PC-9 (cell line): ENCODE measurements at regions of chr19 and their contacts with region 1.

Region 1: GRCh38 chr19:39156326-39157230 is 31.0 kb downstream of the PAK4 start:
- DNase-seq: peak in 1 of 2 experiments; percentile 43
- H3K4me3 ChIP-seq: no peak overlapping the region
- H3K27ac ChIP-seq: no peak overlapping the region
- H3K4me1 ChIP-seq: peaks cover 43% of the 10 kb centered on the region
- H3K27me3 ChIP-seq: no peaks in the 10 kb centered on the region
- CTCF ChIP-seq: no peak

Region 2: GRCh38 chr19:38583219-38583984 is 573.2 kb before region 1 on chr19:
- CTCF ChIA-PET with region 1: no interaction called
- POLR2A ChIA-PET with region 1: no interaction called
- intact Hi-C with region 1: no loop called
- DNase-seq: no peak
- H3K4me3 ChIP-seq: no peak overlapping the region
- H3K27ac ChIP-seq: no peak overlapping the region
- H3K4me1 ChIP-seq: peaks cover 10% of the 10 kb centered on the region
- H3K27me3 ChIP-seq: no peaks in the 10 kb centered on the region
- CTCF ChIP-seq: no peak

Region 3: DNA sequence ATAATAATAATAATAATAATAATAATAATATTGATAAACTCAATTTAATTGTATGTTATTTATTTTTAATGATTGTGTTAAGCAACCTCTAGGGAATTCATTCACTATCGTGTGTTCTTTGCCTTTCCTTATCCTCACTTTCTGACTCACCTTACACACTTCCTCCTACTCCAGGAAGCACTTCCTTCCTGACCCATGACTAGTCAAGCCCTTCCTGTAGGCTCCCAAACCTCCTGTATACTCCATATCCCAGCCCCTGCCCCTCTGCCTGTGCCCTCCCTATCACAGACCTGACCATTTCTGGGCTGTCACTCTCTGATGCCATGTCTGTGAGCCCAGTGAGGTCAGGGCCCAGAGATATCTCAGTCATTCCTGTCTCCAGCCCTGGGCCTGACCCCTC is 351.4 kb before region 1 on chr19:
- CTCF ChIA-PET with region 1: no interaction called
- POLR2A ChIA-PET with region 1: no interaction called
- intact Hi-C with region 1: no loop called
- DNase-seq: peak in 1 of 2 experiments; percentile 35
- H3K4me3 ChIP-seq: no peak overlapping the region
- H3K27ac ChIP-seq: no peak overlapping the region
- H3K4me1 ChIP-seq: peaks cover 8% of the 10 kb centered on the region
- H3K27me3 ChIP-seq: no peaks in the 10 kb centered on the region
- CTCF ChIP-seq: no peak

Region 4: DNA sequence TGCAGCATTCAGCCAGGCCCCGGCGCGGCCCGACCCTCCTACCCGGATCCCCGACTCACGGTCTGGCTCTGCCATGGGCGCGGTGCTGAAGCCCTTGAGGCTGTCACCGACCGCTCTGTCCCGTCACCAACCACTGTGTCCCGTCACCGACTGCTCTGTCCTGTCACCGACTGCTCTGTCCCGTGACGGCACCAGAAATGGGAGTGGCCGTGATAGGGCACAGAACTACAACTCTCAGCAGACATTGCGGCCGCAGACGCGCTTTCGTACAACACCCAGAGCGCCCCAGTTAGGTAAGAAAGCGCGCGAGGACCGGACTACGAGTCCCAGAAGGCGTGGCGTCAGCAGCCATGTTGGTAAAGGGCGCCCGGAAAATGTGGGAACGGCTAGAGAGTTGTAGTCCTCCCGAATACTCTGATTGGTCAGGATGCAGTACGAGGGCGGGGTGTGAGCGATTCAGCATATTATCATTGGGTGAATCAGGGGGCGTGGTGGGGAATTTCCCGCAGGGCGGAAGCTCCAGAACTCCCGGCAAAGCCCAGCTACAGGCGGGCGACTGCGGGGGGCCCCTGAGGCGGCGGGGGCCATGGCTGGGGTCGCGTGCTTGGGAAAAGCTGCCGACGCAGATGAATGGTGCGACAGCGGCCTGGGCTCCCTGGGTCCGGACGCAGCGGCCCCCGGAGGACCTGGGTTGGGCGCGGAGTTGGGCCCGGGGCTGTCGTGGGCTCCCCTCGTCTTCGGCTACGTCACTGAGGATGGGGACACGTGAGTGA is 256.9 kb before region 1 on chr19 and contains the starts of genes NFKBIB and SIRT2:
- CTCF ChIA-PET with region 1: no interaction called
- POLR2A ChIA-PET with region 1: no interaction called
- intact Hi-C with region 1: no loop called
- DNase-seq: peak; percentile 99
- H3K4me3 ChIP-seq: peak within 1 kb of the TSS; percentile 73
- H3K27ac ChIP-seq: peak within 1 kb of the TSS; percentile 64
- H3K4me1 ChIP-seq: peaks cover 16% of the 10 kb centered on the region
- H3K27me3 ChIP-seq: no peaks in the 10 kb centered on the region
- CTCF ChIP-seq: no peak
- total RNA-seq, gene NFKBIB: 18.8 and 21.6 TPM in 2 replicates
- total RNA-seq, gene SIRT2: 29.6 and 32.9 TPM in 2 replicates

Region 5: DNA sequence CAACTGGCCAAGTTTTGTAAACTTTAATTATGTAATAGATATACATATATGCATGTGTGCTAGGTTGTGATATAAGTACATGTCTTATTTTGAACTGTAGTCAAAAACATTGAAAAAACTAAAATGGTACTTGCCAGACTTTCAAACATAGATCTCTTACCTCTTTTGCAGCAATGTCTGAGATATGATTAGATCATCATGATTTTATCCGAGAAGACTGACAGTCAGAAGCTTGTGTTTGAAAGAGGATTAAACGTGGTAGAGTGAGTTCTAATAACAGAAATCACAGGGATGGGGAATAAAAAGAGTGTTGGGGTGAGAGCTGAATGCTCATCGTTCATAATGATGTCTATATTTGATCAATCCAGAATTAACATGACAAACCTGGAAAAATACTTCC is 90.7 kb before region 1 on chr19:
- CTCF ChIA-PET with region 1: interaction called, 11 read pairs
- POLR2A ChIA-PET with region 1: no interaction called
- intact Hi-C with region 1: no loop called
- DNase-seq: no peak
- H3K4me3 ChIP-seq: no peak overlapping the region
- H3K27ac ChIP-seq: no peak overlapping the region
- H3K4me1 ChIP-seq: peaks cover 5% of the 10 kb centered on the region; the same call in 1 of the 2 replicates
- H3K27me3 ChIP-seq: no peaks in the 10 kb centered on the region
- CTCF ChIP-seq: no peak

Region 6: DNA sequence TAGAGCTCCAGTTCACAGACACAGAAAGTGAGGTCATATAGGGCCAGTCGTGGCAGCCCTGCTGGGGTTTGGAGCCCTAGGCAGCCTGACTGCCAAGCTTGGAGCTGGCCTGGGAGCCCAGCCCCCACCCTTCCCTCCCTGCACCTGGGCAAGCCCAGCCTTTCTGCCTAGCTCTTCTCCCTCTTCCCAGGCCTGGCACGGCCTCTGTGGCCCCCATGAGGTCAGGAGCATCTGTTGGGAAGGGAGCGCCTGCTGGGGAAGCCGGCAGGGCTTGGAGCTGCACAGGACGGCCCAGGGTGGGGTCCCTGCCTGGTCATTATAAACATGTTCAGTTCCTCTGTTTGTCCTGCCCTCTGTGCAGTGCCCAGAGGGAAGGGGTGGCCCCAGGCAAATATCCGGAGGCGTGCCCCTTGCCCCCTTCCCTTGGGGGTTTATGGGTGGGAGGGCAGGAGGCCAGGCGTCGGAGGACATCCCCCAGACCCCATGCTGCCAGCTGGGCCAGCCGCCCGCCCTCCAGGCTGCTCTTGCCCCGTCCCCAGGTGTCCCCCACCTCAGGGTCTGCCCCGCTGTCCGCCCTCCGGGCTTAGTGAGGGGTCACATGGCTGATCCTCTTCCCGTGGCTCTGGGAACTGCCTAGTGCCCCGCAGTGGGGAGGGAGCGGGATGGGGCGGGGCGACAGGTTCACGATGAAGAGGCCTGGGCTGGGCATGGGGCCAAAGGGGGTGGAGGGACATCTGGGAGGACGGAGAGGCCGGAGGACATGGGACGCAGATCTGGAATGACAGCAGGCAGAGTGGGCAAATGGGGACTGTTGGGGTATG is 10.2 kb after region 1 on chr19:
- CTCF ChIA-PET with region 1: interaction called, 5 read pairs
- POLR2A ChIA-PET with region 1: no interaction called
- intact Hi-C with region 1: loop called (anchors 1 kb)
- DNase-seq: peak; percentile 67 to 90
- H3K4me3 ChIP-seq: peak overlapping the region; percentile 53
- H3K27ac ChIP-seq: peak overlapping the region; percentile 71
- H3K4me1 ChIP-seq: peaks cover 29% of the 10 kb centered on the region
- H3K27me3 ChIP-seq: no peaks in the 10 kb centered on the region
- CTCF ChIP-seq: no peak

Region 7: GRCh38 chr19:39465956-39466747 is 309.6 kb after region 1 on chr19:
- CTCF ChIA-PET with region 1: no interaction called
- POLR2A ChIA-PET with region 1: no interaction called
- intact Hi-C with region 1: no loop called
- DNase-seq: no peak
- H3K4me3 ChIP-seq: no peak overlapping the region
- H3K27ac ChIP-seq: no peak overlapping the region
- H3K4me1 ChIP-seq: no peaks in the 10 kb centered on the region
- H3K27me3 ChIP-seq: no peaks in the 10 kb centered on the region
- CTCF ChIP-seq: no peak